ENCODE measurements at regions of chr2 and their contacts with region 1.

Region 1: GRCh38 chr2:102166189-102166845 is 20.5 kb upstream of the IL1RL2 start:
- DNase-seq: no peak
- ATAC-seq: no peak
- H3K4me3 ChIP-seq: no peak overlapping the region
- H3K27ac ChIP-seq: no peak overlapping the region
- H3K4me1 ChIP-seq: no peaks in the 10 kb centered on the region
- H3K27me3 ChIP-seq: no peaks in the 10 kb centered on the region
- CTCF ChIP-seq: peak in 1 of 3 experiments; percentile 37; a peak in 2 of 6 replicates
- EP300 ChIP-seq: no peak
- POLR2A ChIP-seq: no peak
- RAD21 ChIP-seq: 0 out of 2 replicates have a peak, but pooled peaks have one; percentile 11

Region 2: DNA sequence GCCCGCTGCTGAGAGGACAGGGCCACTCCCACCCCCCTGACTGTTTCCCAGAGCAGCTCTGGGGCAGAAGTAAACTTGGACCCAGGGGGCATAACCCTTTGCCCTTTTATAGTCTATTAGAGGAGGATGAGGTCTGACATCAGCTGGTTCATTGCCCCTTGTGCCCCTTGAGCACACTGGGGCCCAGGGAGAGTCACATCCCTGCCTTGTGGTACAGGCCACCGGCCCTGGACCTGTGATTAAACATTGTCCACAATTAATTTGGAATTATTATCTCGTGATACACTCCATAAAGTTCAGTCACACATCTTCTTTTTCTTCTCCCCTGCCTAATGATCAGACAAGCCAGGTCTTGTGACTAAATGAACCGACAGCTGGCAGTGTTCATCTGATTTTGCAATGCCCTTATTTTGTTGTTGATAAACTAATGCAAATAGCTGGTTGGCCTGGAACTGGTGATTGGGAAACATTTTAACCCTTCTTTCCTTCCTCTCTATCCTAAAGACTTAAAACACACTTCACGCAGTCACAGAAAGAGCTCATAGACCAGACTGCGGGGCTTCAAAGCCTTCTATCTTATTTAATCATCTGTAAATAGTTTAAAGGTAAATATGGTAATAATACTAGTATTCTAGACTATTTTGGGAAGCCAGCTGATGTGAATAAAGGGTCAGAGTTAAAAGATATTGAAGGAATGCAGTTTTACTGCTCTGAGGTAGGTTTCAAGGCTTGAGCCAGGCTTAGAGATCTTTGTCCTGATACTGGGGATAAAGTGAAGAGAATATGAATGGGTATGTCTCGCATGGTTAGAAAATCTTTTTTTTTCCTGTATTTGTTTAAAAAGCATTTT is 10.4 kb before region 1 on chr2:
- CTCF ChIA-PET with region 1: interaction called, 19 read pairs
- POLR2A ChIA-PET with region 1: no interaction called
- RAD21 ChIA-PET with region 1: no interaction called
- SMC1A ChIA-PET with region 1: interaction called, 28 read pairs
- in situ Hi-C with region 1: no loop called
- intact Hi-C with region 1: no loop called
- DNase-seq: no peak
- ATAC-seq: no peak
- H3K4me3 ChIP-seq: no peak overlapping the region
- H3K27ac ChIP-seq: no peak overlapping the region
- H3K4me1 ChIP-seq: no peaks in the 10 kb centered on the region
- H3K27me3 ChIP-seq: no peaks in the 10 kb centered on the region
- CTCF ChIP-seq: no peak
- EP300 ChIP-seq: no peak
- POLR2A ChIP-seq: no peak
- RAD21 ChIP-seq: no peak